Activated CD8-positive, alpha-beta T cell treated with anti-CD3 and anti-CD28 coated beads, Interleukin-2, amount 10 ng/mL, durations not matched to agents 7 days and 5 days (primary cell): ENCODE measurements at regions of chr1 and their contacts with region 1.

Region 1: GRCh38 chr1:152869808-152870419 is 8.2 kb upstream of the SMCP start:
- DNase-seq: peak; percentile 71
- ATAC-seq: peak; percentile 80
- H3K4me3 Mint-ChIP-seq: no peak overlapping the region
- H3K27ac Mint-ChIP-seq: no peak overlapping the region
- H3K4me1 Mint-ChIP-seq: no peaks in the 10 kb centered on the region
- H3K27me3 Mint-ChIP-seq: no peaks in the 10 kb centered on the region

Region 2: DNA sequence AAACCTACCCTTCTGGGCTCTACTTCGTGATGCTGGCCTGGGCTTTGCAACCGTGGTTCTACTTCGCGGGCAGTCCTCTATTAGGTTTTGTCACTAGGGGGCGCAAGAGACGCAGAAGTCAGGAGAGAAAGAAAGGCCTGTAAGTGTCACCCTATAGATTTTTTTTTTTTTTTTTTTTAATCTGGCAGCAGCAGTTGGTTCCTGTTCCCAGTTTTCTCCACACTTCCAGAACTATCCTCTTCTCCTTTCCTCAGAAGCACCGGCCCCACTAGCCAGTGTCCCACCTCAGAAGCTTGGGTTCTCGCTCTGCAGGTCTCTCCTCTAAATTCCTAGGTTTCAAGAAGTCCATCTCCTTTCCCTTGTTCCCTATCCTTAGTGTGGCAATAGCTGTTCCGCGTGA is 215.8 kb before region 1 on chr1:
- CTCF ChIA-PET with region 1: no interaction called
- POLR2A ChIA-PET with region 1: no interaction called
- DNase-seq: peak; percentile 71
- ATAC-seq: peak; percentile 61
- H3K4me3 Mint-ChIP-seq: no peak overlapping the region
- H3K27ac Mint-ChIP-seq: no peak overlapping the region
- H3K4me1 Mint-ChIP-seq: peaks cover 3% of the 10 kb centered on the region
- H3K27me3 Mint-ChIP-seq: peaks cover 22% of the 10 kb centered on the region

Region 3: GRCh38 chr1:152902636-152903035 is 32.7 kb after region 1 on chr1:
- CTCF ChIA-PET with region 1: no interaction called
- POLR2A ChIA-PET with region 1: no interaction called
- DNase-seq: no peak
- ATAC-seq: no peak
- H3K4me3 Mint-ChIP-seq: no peak overlapping the region
- H3K27ac Mint-ChIP-seq: no peak overlapping the region
- H3K4me1 Mint-ChIP-seq: no peaks in the 10 kb centered on the region
- H3K27me3 Mint-ChIP-seq: peaks cover 8% of the 10 kb centered on the region

Region 4: DNA sequence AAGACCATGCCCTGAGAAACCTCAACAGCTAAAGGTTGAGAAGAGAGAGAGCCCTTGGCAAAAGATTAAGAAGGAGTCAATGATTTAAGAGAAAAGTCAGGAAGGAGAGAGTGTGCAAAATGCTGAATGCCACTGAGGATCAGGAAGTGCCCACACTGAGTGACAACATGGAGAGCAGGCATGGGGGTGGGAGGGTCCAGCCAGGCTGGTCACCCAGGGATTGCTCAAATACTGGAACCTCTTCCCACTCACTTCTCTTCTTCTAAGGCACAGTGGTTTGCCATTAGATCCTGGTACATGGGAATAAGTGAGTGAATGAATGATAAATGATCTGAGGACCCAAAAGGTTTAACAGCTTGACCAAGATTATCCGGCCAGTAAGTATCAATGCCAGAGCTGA is 358.6 kb after region 1 on chr1:
- CTCF ChIA-PET with region 1: interaction called, 11 read pairs
- POLR2A ChIA-PET with region 1: no interaction called
- DNase-seq: no peak
- ATAC-seq: no peak
- H3K4me3 Mint-ChIP-seq: no peak overlapping the region
- H3K27ac Mint-ChIP-seq: no peak overlapping the region
- H3K4me1 Mint-ChIP-seq: no peaks in the 10 kb centered on the region
- H3K27me3 Mint-ChIP-seq: peaks cover 3% of the 10 kb centered on the region